ENCODE measurements at regions of chr21 and their contacts with region 1.

Region 1: DNA sequence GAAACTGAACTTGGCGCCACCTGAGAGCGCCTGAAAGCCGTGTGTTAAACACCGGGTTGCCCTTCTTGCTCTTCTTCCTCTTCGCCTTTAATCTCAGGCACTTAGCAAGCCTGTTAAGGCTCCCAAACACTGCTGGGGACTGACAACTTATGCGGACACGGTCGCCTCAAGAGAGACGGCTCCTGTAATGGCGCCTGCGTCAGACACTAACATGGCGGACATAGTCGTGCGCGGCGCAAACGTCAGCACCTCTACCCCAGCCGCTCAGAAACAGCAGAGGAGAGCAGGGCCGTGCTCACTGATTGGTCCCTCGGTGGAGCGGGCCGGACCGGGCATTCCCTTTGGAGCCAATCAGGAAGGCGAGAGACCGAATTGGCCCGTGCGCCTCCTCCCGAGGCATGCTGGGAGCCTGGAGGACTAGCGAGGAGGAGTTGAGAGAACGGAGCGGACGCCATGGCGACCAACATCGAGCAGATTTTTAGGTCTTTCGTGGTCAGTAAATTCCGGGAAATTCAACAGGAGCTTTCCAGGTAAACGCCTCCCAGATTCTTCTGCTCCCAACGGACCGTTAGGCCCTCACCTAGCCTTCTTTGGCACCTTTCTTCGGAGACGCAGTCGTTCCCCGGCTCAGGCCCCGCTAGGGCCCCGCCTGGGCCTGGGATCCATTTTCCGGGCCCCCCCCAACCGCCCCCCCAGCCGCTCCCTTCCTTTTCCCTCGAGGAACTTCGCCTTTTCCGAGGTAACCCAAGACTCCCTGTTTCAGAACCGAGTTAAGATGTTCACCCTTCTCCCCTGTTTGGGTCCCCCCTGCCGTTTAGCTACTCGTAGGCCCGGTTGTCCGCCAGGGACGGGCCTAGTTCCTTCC is at the start of gene SON:
- DNase-seq: peak; percentile 99 to 100 (median 99)
- ATAC-seq: peak; percentile 97 to 99 (median 98)
- H3K4me3 ChIP-seq: peak within 1 kb of the TSS; percentile 73 to 94 (median 81)
- H3K27ac ChIP-seq: peak within 1 kb of the TSS; percentile 98 to 100 (median 99)
- H3K4me1 ChIP-seq: peaks cover 3 to 50% (median 33%) of the 10 kb centered on the region in 12 donors
- H3K27me3 ChIP-seq: no peaks in the 10 kb centered on the region
- CTCF ChIP-seq: no peak
- POLR2A ChIP-seq: peak in 1 of 2 donors; percentile 81
- total RNA-seq, gene SON: 90.7 to 201 (median 134) TPM

Region 2: GRCh38 chr21:33479679-33480480 is 63.0 kb before region 1 on chr21 and contains the start of gene TMEM50B:
- intact Hi-C with region 1: loop called in 3 of 10 experiments (anchors 2 to 5 kb)
- DNase-seq: peak; percentile 96 to 98 (median 97)
- ATAC-seq: peak; percentile 96 to 98 (median 98)
- H3K4me3 ChIP-seq: peak within 1 kb of the TSS; percentile 64 to 98 (median 90)
- H3K27ac ChIP-seq: peak within 1 kb of the TSS; percentile 87 to 100 (median 98)
- H3K4me1 ChIP-seq: peaks cover 0 to 26% (median 12%) of the 10 kb centered on the region in 12 donors
- H3K27me3 ChIP-seq: no peaks in the 10 kb centered on the region
- CTCF ChIP-seq: peak; percentile 24 to 80 (median 56)
- POLR2A ChIP-seq: peak; percentile 86 to 95
- total RNA-seq, gene TMEM50B: 23.5 to 44.2 (median 31.2) TPM

Region 3: DNA sequence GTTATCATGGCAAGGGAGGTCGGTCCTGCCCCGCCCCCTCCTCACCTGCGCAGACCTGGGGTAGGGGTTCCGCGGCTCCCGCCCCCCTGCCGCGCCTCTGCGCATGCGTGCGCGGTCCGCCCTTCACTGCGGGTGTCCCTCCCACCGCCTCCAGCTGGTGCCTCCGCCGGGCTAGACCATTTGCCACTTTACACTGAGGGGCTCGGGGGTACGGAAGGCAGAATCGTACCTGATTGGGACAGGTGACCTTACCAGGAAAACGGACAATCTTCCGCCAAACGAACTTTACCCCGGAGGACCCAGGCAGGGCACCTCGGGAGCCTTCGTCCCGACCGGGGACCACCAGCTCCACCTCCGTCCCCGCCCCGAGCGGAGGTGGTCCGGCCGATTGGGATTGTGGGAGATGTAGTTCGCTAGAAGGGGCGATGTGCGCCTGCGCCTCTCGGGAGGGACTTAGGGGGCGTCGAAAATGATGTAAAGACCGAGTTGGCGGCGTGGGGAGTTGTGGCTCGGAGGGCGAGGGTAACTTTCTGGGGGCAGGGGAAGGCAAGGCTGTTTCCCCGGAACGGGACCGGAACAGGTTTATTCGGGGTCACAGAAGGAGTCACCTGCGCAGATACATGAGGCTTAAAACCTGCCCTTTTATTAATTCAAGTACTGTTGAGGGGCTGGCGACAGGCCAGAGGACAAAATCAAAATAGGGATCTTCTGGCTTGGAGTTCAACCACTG is 51.3 kb before region 1 on chr21 and contains the start of gene DNAJC28:
- intact Hi-C with region 1: loop called in 1 of 10 experiments (anchors 5 kb)
- DNase-seq: peak; percentile 93 to 97 (median 95)
- ATAC-seq: peak; percentile 98 to 99 (median 99)
- H3K4me3 ChIP-seq: peak within 1 kb of the TSS; percentile 48 to 91 (median 66)
- H3K27ac ChIP-seq: peak within 1 kb of the TSS; percentile 53 to 89 (median 81)
- H3K4me1 ChIP-seq: peaks cover 0 to 16% (median 6%) of the 10 kb centered on the region in 12 donors
- H3K27me3 ChIP-seq: no peaks in the 10 kb centered on the region
- CTCF ChIP-seq: peak in 1 of 12 donors; percentile 7
- POLR2A ChIP-seq: peak in 1 of 2 donors; percentile 68
- total RNA-seq, gene DNAJC28: 2.5 to 10.3 (median 6.6) TPM

Region 4: DNA sequence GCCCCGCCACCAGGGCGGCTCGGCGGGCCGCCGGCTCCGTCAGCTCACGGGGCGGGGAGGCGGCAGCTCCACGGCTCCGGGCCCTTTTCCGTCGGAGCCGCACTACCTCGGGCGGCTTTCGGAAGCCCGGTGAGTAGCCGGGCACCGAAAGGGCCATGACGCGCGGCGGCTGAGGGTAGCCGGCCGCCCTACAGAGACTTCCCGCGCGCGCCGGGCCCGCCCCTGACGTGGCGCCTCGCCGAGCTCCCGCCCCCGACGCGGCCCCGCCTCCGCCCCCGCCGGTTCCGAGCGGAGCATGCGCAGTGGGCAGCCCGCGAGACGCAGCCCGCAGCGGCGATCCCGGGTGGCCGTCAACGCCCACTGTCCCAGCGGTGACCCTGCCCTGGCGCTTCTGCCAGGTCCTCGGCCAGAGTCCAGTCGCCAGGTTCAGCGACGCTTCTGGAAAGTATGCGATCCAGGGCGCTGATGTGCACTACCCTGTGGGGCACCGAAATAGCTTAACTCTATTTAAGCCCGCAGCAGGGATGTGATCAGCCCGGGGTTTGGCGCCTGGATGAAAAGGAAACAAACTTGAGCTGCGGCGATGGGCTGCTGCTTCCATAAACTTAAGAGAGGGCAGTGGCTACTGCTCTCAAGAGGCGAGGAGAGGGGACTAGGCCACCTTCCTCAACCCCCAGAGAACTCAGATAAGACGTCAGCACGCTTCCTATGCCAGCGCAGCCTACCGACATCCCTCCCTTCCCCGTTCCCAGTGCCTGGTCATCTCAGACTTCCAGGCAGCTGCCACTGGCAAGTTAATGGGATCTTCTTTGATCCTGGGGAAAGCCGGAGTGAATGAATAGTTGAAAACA is 45.8 kb after region 1 on chr21 and contains the start of gene DONSON:
- intact Hi-C with region 1: loop called in 5 of 10 experiments (anchors 2 to 10 kb)
- DNase-seq: peak; percentile 90 to 97 (median 92)
- ATAC-seq: peak; percentile 87 to 97 (median 96)
- H3K4me3 ChIP-seq: peak within 1 kb of the TSS; percentile 64 to 94 (median 84)
- H3K27ac ChIP-seq: peak within 1 kb of the TSS; percentile 43 to 92 (median 86)
- H3K4me1 ChIP-seq: peaks cover 0 to 21% (median 10%) of the 10 kb centered on the region in 12 donors
- H3K27me3 ChIP-seq: no peaks in the 10 kb centered on the region
- CTCF ChIP-seq: peak in 1 of 12 donors; percentile 21
- POLR2A ChIP-seq: peak in 1 of 2 donors; percentile 77
- total RNA-seq, gene DONSON: 4.0 to 9.3 (median 5.4) TPM

Region 5: DNA sequence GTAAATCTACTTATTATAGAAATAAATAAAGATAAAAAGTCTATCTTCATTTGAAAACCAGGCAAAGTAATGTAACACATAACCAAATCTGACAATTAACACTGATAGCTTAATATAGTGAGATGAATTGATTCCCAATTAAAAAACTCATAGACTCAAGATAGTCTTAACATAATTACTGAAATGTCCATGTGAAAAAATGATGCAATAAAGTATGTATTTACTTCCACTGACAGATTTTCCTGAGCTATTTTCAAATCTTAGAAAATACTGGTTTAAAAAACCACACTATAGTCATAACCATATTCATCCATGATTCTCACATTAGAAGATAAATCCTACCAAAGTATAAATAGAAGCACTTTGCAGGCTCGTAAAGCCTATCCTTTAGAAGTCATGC is 55.2 kb after region 1 on chr21:
- intact Hi-C with region 1: loop called in 1 of 10 experiments (anchors 10 kb)
- DNase-seq: no peak
- ATAC-seq: no peak
- H3K4me3 ChIP-seq: no peak overlapping the region
- H3K27ac ChIP-seq: no peak overlapping the region
- H3K4me1 ChIP-seq: no peaks in the 10 kb centered on the region
- H3K27me3 ChIP-seq: no peaks in the 10 kb centered on the region
- CTCF ChIP-seq: no peak
- POLR2A ChIP-seq: no peak

Measured in heart left ventricle (tissue), 16 donors.